Activated CD4-positive, alpha-beta T cell treated with anti-CD3 and anti-CD28 coated beads, Interleukin-2, amount 10 ng/mL, durations not matched to agents 24 days and 14 days (primary cell): ENCODE measurements at regions of chr2 and their contacts with region 1.

Region 1: GRCh38 chr2:45643543-45644542 is 7.6 kb upstream of the PRKCE start:
- DNase-seq: peak; percentile 93
- H3K4me3 Mint-ChIP-seq: peak overlapping the region; percentile 76
- H3K27ac Mint-ChIP-seq: no peak overlapping the region
- H3K4me1 Mint-ChIP-seq: peaks cover 12% of the 10 kb centered on the region
- H3K27me3 Mint-ChIP-seq: peaks cover 36% of the 10 kb centered on the region

Region 2: DNA sequence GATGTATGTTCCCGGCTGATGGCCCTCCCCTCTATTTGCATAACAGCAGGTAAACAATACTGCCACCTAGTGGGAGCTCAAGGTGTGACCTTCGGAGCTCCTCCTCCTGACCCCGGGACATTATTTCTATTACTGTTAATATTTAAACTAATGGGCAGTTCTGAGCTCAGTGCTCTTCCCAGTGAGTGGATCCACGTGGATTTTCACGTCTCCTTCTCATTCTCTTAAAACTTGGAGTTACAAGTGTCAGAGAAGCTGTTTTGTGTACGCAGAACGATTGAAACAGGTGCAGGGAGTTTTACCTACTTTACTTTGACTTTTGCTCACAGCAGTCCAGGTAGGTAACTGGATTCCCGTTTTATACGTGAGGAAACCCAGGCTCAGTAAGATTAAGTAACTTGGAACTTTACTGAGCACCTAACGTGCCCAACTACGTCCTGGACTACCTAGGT is 134.9 kb after region 1 on chr2:
- intact Hi-C with region 1: loop called (anchors 1 kb)
- DNase-seq: peak; percentile 89
- H3K4me3 Mint-ChIP-seq: no peak overlapping the region
- H3K27ac Mint-ChIP-seq: no peak overlapping the region
- H3K4me1 Mint-ChIP-seq: peaks cover 13% of the 10 kb centered on the region
- H3K27me3 Mint-ChIP-seq: no peaks in the 10 kb centered on the region

Region 3: GRCh38 chr2:45849491-45850283 is 205.8 kb after region 1 on chr2:
- intact Hi-C with region 1: loop called (anchors 10 kb)
- DNase-seq: no peak
- H3K4me3 Mint-ChIP-seq: peak overlapping the region; percentile 4
- H3K27ac Mint-ChIP-seq: peak overlapping the region; percentile 14
- H3K4me1 Mint-ChIP-seq: peaks cover 39% of the 10 kb centered on the region
- H3K27me3 Mint-ChIP-seq: no peaks in the 10 kb centered on the region

Region 4: GRCh38 chr2:45935791-45936622 is 292.2 kb after region 1 on chr2:
- intact Hi-C with region 1: loop called (anchors 1 kb)
- DNase-seq: peak; percentile 86
- H3K4me3 Mint-ChIP-seq: no peak overlapping the region
- H3K27ac Mint-ChIP-seq: no peak overlapping the region
- H3K4me1 Mint-ChIP-seq: peaks cover 2% of the 10 kb centered on the region
- H3K27me3 Mint-ChIP-seq: no peaks in the 10 kb centered on the region

Region 5: DNA sequence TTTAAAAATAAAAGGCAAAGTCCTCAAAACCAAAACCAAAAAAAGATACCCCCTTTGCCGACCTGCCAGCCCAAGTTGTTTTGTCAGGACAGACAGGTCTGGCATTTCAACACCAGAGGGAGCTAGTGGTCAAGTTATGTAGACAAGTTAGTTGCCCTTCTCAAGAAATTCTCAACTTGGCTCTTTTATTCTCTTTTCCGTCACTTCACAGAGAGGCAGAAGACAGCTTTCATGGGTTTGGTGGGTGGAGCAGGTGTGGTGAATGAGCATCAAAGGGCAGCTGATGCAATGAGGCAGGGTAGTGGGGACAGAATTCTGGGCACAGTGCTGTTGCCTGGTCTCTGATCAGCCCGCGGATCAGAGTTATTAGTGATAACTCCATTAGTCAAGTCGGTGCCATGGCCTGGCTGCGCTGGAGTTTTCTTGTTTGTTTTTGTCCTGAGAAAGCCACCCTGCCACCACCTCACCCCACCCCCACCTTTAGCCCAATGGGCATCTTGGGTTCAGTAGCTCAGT is 349.7 kb after region 1 on chr2:
- intact Hi-C with region 1: loop called (anchors 5 kb)
- DNase-seq: peak; percentile 89
- H3K4me3 Mint-ChIP-seq: no peak overlapping the region
- H3K27ac Mint-ChIP-seq: no peak overlapping the region
- H3K4me1 Mint-ChIP-seq: peaks cover 2% of the 10 kb centered on the region
- H3K27me3 Mint-ChIP-seq: peaks cover 2% of the 10 kb centered on the region

Region 6: GRCh38 chr2:46091004-46091403 is 447.2 kb after region 1 on chr2:
- intact Hi-C with region 1: no loop called
- DNase-seq: no peak
- H3K4me3 Mint-ChIP-seq: no peak overlapping the region
- H3K27ac Mint-ChIP-seq: no peak overlapping the region
- H3K4me1 Mint-ChIP-seq: peaks cover 7% of the 10 kb centered on the region
- H3K27me3 Mint-ChIP-seq: no peaks in the 10 kb centered on the region